Adrenal gland (tissue), 19 donors: ENCODE measurements at regions of chr1 and their contacts with region 1.

Region 1: DNA sequence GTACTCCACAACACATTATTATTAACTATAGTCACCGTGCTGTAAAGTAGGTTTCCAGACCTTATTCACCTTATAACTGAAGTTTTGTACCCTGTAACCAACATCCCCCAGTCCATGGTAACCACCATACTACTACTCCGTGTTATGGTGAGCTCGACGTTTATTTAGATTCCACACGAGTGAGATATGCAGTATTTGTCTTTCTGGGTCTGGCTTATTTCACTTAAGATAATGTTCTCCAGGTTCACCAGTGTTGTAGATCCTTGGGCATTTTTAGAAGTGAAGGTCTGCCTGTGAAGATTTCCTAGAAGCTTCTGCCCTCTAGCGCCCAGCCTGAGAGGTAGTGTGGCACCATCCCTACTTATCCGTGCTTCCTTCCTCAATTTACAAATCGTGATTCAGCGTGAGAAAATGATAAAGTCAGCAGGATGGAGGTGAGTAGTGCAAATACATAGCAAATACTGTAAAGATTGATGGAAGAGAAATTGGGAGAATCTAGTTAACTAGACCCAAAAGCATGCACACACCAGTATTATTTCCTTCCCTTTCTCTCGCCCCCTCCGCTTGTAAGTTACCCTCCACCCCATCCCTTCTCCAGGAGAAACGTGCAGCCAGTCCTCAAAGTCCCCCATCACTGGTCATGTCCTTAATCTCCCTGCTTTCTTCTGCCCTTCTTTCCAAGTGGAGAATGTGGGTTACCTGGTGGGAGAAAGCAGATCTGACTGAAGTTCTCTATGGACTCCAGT is 36.0 kb upstream of the DISC1 start:
- DNase-seq: peak; percentile 57 to 79 (median 64)
- H3K4me3 ChIP-seq: no peak overlapping the region
- H3K27ac ChIP-seq: no peak overlapping the region
- H3K4me1 ChIP-seq: no peaks in the 10 kb centered on the region
- H3K27me3 ChIP-seq: no peaks in the 10 kb centered on the region
- CTCF ChIP-seq: peak; percentile 48 to 79 (median 77)
- POLR2A ChIP-seq: no peak

Region 2: DNA sequence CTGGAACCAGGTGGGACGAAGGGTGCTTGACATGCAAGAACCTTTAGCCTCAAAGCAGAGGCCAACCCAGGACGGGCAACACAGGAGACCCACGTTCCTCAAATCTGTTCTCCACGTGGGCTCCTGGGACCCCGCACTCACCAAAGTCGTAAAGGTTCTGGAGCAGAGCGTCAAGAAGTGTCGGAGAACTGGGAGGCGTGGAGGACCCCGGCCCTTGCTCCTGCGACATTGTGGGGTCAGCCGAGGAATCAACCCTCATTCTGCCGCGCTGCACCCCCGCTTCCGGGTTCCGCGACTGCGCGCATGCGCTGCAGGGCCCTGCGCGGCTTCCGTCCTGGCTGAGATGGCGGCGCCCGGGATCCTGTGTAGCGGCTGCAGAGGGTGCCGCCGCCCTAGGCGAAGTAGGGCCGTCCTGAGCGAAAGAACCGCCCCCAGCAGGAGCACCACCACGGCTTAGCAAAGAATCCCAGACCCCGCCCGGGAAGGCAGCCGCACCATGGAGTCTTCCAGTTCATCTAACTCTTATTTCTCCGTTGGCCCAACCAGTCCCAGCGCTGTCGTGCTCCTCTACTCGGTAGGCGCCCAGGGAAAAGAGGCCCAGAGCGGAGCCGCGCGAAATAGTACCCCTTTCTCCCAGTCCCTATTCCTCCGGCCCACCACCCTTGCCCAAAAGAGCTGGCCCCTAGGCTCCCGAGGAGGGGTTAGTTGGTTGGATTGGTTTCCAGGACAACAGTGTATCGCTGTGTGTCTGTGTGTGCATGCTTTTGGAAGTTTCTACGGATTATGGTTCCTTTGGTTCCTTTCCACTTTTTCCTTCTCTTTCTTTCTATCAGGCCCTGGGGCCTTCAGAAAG is 349.5 kb before region 1 on chr1 and contains the start of gene GNPAT:
- intact Hi-C with region 1: loop called in 1 of 2 experiments (anchors 10 kb)
- DNase-seq: peak; percentile 81 to 90 (median 86)
- H3K4me3 ChIP-seq: peak within 1 kb of the TSS; percentile 81 to 96 (median 90)
- H3K27ac ChIP-seq: peak within 1 kb of the TSS; percentile 45 to 92 (median 80)
- H3K4me1 ChIP-seq: peaks cover 23 to 45% of the 10 kb centered on the region in 2 donors
- H3K27me3 ChIP-seq: no peaks in the 10 kb centered on the region
- CTCF ChIP-seq: no peak
- POLR2A ChIP-seq: peak; percentile 73 to 82
- total RNA-seq, gene GNPAT: 27.0 to 65.2 (median 44.8) TPM

Region 3: GRCh38 chr1:231337472-231338269 is 253.0 kb before region 1 on chr1 and contains the start of gene EXOC8:
- intact Hi-C with region 1: loop called in 1 of 2 experiments (anchors 10 kb)
- DNase-seq: peak; percentile 93 to 98 (median 97)
- H3K4me3 ChIP-seq: peak within 1 kb of the TSS; percentile 67 to 99 (median 80)
- H3K27ac ChIP-seq: peak within 1 kb of the TSS; percentile 94 to 97 (median 95)
- H3K4me1 ChIP-seq: peaks cover 42 to 53% of the 10 kb centered on the region in 2 donors
- H3K27me3 ChIP-seq: no peaks in the 10 kb centered on the region
- CTCF ChIP-seq: no peak
- POLR2A ChIP-seq: peak; percentile 84 to 93
- total RNA-seq, gene EXOC8: 9.6 to 21.1 (median 14.9) TPM

Region 4: DNA sequence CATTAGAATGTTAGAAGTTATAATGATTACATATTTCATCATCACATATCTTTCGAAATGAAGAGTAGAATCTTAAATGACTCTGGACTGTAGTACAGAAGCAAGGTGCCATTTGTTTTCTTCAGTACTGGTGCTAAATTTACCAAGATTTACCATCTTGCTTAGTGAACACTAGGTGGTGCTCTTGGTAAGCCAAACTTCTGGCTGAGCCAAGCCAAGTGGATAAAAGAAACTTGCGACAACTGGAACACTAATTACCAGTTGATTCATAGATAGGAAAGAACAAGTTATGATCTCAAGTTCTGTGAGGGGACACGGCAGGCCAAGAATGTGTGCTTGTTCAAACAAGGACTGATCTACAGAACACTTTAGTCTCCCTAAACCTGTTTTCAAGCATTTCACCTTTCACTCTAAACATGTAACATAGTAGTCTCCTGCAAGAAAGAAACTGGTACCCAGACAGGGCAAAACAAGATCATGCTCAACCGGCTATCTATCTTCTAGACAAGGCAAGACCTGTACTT is 232.7 kb before region 1 on chr1:
- intact Hi-C with region 1: loop called (anchors 5 to 10 kb)
- DNase-seq: peak; percentile 28 to 70 (median 54)
- H3K4me3 ChIP-seq: no peak overlapping the region
- H3K27ac ChIP-seq: no peak overlapping the region
- H3K4me1 ChIP-seq: peaks cover 0 to 11% of the 10 kb centered on the region in 2 donors
- H3K27me3 ChIP-seq: no peaks in the 10 kb centered on the region
- CTCF ChIP-seq: peak; percentile 61 to 89 (median 85)
- POLR2A ChIP-seq: no peak

Region 5: DNA sequence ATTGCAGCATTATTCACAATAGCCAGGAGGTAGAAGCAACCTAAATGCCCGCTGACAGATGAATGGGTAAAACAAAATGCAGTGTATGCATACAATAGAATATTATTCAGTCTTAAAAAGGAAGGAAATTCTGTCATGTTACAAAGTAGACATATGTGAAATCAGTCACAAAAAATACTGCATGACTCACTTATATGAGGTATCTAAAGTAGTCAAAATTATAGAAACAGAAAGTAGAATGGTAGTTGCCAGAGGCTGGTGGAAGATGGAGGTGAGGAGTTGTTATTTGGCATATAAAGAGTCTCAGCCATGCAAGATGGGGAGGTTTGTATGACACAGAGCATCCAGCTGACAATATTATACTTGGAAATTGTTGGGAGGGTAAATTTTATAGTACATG is 125.6 kb before region 1 on chr1:
- intact Hi-C with region 1: no loop called
- DNase-seq: no peak
- H3K4me3 ChIP-seq: no peak overlapping the region
- H3K27ac ChIP-seq: no peak overlapping the region
- H3K4me1 ChIP-seq: no peaks in the 10 kb centered on the region
- H3K27me3 ChIP-seq: no peaks in the 10 kb centered on the region
- CTCF ChIP-seq: no peak
- POLR2A ChIP-seq: no peak